AG04450 (cell line): ENCODE measurements at regions of chr14 and their contacts with region 1.

Region 1: GRCh38 chr14:69242311-69243224 is 17.4 kb upstream of the GALNT16 start:
- DNase-seq: peak; percentile 39
- H3K4me3 ChIP-seq: no peak overlapping the region
- H3K27ac ChIP-seq: no peak overlapping the region
- H3K27me3 ChIP-seq: no peaks in the 10 kb centered on the region
- CTCF ChIP-seq: peak; percentile 76

Region 2: GRCh38 chr14:69226178-69226577 is 16.4 kb before region 1 on chr14:
- CTCF ChIA-PET with region 1: interaction called, 18 read pairs
- POLR2A ChIA-PET with region 1: no interaction called
- DNase-seq: no peak
- H3K4me3 ChIP-seq: no peak overlapping the region
- H3K27ac ChIP-seq: no peak overlapping the region
- H3K27me3 ChIP-seq: no peaks in the 10 kb centered on the region
- CTCF ChIP-seq: no peak

Region 3: DNA sequence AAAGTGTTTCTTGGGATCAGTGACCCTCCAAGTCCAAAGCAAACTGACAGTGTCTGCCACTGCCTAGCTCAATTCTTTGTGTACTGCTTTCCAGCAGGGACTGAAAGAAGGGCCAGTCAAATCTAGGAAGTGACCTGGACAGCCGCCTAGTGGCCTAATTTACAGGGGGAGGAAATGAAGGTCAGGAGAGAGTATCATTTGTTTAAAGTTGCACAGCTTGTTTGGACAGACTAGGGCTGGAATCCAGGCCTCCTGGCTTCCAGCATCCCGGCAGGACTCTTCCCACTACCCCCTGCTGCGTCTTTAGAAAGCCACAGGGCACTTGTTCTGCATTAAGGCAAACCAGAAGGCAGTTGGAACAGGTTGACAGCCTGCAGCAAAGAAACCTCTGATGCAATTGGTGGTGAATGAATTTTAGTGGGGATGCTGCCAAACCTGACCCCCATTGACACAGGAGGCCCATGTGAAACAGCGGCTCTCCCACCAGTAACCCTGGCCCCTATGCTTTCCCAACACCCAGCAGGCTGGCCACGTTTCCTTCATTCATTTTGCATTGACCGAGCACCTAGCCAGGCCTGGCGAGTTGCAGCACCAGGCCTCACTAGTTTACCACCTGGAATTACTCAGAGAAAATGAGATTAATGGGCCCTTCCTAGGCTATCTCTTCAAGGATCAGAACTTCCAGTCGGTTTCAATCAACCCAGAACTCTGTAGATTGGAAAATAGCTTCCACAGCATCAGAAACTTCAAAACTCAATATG is 45.6 kb after region 1 on chr14:
- CTCF ChIA-PET with region 1: interaction called, 15 read pairs
- POLR2A ChIA-PET with region 1: no interaction called
- DNase-seq: peak; percentile 15
- H3K4me3 ChIP-seq: no peak overlapping the region
- H3K27ac ChIP-seq: no peak overlapping the region
- H3K27me3 ChIP-seq: peaks cover 12% of the 10 kb centered on the region
- CTCF ChIP-seq: peak; percentile 61

Region 4: GRCh38 chr14:69363055-69363454 is 120.5 kb after region 1 on chr14:
- CTCF ChIA-PET with region 1: interaction called, 61 read pairs
- POLR2A ChIA-PET with region 1: no interaction called
- DNase-seq: peak; percentile 11
- H3K4me3 ChIP-seq: no peak overlapping the region
- H3K27ac ChIP-seq: no peak overlapping the region
- H3K27me3 ChIP-seq: peaks cover 3% of the 10 kb centered on the region
- CTCF ChIP-seq: peak; percentile 62

Region 5: GRCh38 chr14:69460093-69460701 is 217.6 kb after region 1 on chr14:
- CTCF ChIA-PET with region 1: interaction called, 100 read pairs
- POLR2A ChIA-PET with region 1: no interaction called
- DNase-seq: peak; percentile 80
- H3K4me3 ChIP-seq: no peak overlapping the region
- H3K27ac ChIP-seq: no peak overlapping the region
- H3K27me3 ChIP-seq: no peaks in the 10 kb centered on the region
- CTCF ChIP-seq: peak; percentile 85